ENCODE measurements at regions of chr10 and their contacts with region 1.

Region 1: GRCh38 chr10:92689663-92690210 is at the start of gene HHEX:
- DNase-seq: peak; percentile 52
- ATAC-seq: peak; percentile 54
- H3K4me3 Mint-ChIP-seq: peak within 1 kb of the TSS; percentile 51
- H3K27ac Mint-ChIP-seq: no peak within 1 kb of the TSS
- H3K4me1 Mint-ChIP-seq: peaks cover 20% of the 10 kb centered on the region
- H3K27me3 Mint-ChIP-seq: peaks cover 58% of the 10 kb centered on the region
- total RNA-seq, gene HHEX: 0.11 TPM in 1 of 2 experiments, not detected in the other

Region 2: DNA sequence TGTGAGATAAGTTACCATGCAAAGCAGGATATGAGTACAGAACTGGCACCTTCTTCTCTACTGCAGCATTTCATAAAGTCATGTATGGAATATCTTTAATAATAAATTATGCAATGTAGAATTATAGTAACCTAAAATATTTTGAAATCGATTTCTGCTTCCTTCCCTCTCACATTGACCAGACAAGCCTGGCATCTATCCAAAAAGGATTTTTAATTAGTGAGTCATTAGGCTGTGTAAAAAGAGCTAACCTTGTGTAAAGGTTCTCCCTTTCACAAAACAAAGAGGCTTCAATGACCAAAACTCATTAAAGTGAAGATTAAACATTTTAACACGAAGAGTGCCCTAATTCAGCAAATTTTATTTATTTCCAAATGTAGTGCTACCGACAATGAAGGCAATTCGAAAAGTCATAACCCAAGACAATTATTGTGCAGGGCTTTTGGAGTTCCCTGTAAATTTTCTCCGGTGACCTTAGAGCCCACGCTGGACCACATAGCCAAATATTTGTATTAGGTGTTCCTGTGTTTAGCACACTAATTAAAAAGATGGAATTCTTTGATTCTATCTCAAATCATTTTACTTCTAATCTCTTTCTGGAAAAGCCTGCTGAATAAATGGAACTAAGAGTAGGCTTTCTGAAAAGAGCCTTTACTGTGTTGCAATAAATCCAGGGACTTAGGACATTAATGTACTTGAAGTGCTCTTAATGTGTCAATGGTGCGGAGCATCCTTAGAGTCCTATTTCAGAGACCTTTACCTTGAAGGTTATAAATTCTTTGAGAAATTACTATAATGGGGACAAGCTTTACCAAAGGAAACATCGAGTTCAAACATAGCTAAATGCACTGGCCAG is 110.1 kb after region 1 on chr10:
- CTCF ChIA-PET with region 1: no interaction called
- POLR2A ChIA-PET with region 1: no interaction called
- intact Hi-C with region 1: no loop called
- DNase-seq: no peak
- ATAC-seq: no peak
- H3K4me3 Mint-ChIP-seq: no peak overlapping the region
- H3K27ac Mint-ChIP-seq: no peak overlapping the region
- H3K4me1 Mint-ChIP-seq: no peaks in the 10 kb centered on the region
- H3K27me3 Mint-ChIP-seq: peaks cover 2% of the 10 kb centered on the region

Region 3: DNA sequence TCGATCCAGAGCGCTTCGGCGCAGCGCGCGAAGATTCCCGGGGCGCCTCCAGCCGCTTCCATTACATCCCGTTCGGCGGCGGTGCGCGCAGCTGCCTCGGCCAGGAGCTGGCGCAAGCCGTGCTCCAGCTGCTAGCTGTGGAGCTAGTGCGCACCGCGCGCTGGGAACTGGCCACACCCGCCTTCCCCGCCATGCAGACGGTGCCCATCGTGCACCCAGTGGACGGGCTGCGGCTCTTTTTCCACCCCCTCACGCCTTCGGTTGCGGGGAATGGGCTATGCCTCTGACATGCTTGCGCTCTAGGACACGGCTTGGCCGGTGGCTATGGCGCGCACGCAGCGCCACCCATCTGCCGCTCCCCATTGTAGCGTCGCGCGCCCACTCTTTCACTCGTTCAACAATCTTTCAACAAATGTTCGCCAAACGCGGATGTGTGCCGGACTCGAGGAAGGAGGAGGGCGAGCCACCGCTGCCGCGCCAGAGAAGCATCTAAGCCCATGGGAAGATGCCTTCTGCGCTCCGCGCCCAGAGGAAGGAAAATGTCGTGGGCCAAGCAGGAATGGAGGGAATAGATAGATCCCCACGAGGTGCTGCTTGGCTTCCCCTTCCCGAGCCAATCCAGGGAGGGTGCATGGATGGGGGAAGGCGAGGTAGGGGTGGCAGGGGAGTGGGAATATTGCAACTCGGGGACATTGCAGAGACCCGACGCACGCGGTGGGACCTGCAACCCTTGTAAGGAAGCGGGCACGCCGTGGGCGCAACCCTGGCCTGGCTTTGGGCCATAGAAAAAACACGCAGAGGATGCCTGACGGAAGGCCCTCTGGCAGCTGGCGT is 378.9 kb after region 1 on chr10:
- CTCF ChIA-PET with region 1: no interaction called
- POLR2A ChIA-PET with region 1: no interaction called
- intact Hi-C with region 1: loop called (anchors 5 kb)
- DNase-seq: peak; percentile 41
- ATAC-seq: no peak
- H3K4me3 Mint-ChIP-seq: no peak overlapping the region
- H3K27ac Mint-ChIP-seq: no peak overlapping the region
- H3K4me1 Mint-ChIP-seq: peaks cover 18% of the 10 kb centered on the region
- H3K27me3 Mint-ChIP-seq: peaks cover 77% of the 10 kb centered on the region

Measured in activated CD4-positive, alpha-beta T cell treated with anti-CD3 and anti-CD28 coated beads for 36 hours (primary cell).